Astrocyte of the cerebellum (primary cell): ENCODE measurements at regions of chr21 and their contacts with region 1.

Region 1: GRCh38 chr21:20404915-20405314 is 593.3 kb upstream of the NCAM2 start:
- DNase-seq: no peak
- H3K4me3 ChIP-seq: no peak overlapping the region
- CTCF ChIP-seq: no peak

Region 2: DNA sequence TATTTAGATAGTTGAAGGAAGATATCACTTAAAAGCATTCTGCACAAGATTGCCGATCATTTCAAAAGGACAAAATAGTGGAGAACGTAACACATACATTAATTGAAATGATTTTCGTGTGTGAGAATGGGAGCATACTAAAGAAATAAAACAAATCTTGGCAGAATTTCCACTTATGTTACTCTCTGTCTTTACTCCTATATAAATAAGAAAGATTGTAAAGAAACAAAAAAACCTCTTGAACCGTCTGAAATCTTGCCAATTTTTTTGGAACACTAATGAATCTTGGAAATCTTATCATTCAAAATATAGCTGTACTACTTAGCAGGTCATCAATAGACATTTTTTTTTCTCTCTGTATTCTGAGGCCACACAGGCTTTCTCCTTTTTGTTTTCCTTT is 64.4 kb after region 1 on chr21:
- in situ Hi-C with region 1: loop called (anchors 5 kb)
- DNase-seq: no peak
- H3K4me3 ChIP-seq: no peak overlapping the region
- CTCF ChIP-seq: no peak